ENCODE measurements at regions of chr5 and their contacts with region 1.

Region 1: GRCh38 chr5:100903039-100903887 is at the start of gene ST8SIA4:
- DNase-seq: peak; percentile 87 to 96 (median 88)
- H3K4me3 ChIP-seq: peak within 1 kb of the TSS; percentile 94
- H3K4me3 Mint-ChIP-seq: peak within 1 kb of the TSS; percentile 90 to 99 (median 96)
- H3K27ac ChIP-seq: peak within 1 kb of the TSS; percentile 86
- H3K27ac Mint-ChIP-seq: peak within 1 kb of the TSS; percentile 92 to 99 (median 97)
- H3K4me1 ChIP-seq: peaks cover 38% of the 10 kb centered on the region
- H3K4me1 Mint-ChIP-seq: peaks cover 48 to 58% (median 56%) of the 10 kb centered on the region in 3 donors
- H3K27me3 ChIP-seq: no peaks in the 10 kb centered on the region
- H3K27me3 Mint-ChIP-seq: no peaks in the 10 kb centered on the region
- total RNA-seq, gene ST8SIA4: 53.5 to 56.9 TPM

Region 2: GRCh38 chr5:100779669-100780375 is 123.4 kb before region 1 on chr5:
- CTCF ChIA-PET with region 1: interaction called, 13 read pairs
- POLR2A ChIA-PET with region 1: interaction called, 7 read pairs
- DNase-seq: no peak
- H3K4me3 ChIP-seq: peak overlapping the region; percentile 56
- H3K4me3 Mint-ChIP-seq: peak overlapping the region; percentile 67 to 82 (median 79)
- H3K27ac ChIP-seq: no peak overlapping the region
- H3K27ac Mint-ChIP-seq: peak overlapping the region; percentile 11 to 96 (median 88)
- H3K4me1 ChIP-seq: peaks cover 15% of the 10 kb centered on the region
- H3K4me1 Mint-ChIP-seq: peaks cover 25 to 33% (median 32%) of the 10 kb centered on the region in 3 donors
- H3K27me3 ChIP-seq: no peaks in the 10 kb centered on the region
- H3K27me3 Mint-ChIP-seq: peaks cover 0 to 1% of the 10 kb centered on the region in 2 donors

Region 3: DNA sequence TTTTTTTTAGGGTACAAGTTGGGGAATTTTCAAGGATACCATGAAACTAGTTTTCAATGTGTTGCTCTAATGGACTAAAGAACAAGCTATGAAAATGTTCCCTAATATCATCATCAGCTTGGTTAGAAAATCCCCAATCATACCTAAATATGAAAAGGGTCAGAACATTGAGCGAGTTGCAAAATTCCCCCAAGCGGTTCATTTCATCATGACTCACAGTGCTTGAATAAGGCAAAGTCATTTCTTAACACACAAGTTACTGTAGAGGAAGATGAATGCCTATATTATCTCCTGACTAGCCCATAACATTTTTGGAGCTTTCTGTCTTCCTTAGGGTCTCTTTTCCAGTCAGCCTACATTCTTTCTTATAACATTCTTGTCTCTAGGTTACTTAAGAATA is 62.9 kb before region 1 on chr5:
- CTCF ChIA-PET with region 1: interaction called, 19 read pairs
- POLR2A ChIA-PET with region 1: interaction called, 5 read pairs
- DNase-seq: peak in 1 of 5 donors; percentile 4
- H3K4me3 ChIP-seq: no peak overlapping the region
- H3K4me3 Mint-ChIP-seq: peak overlapping the region in 4 of 7 donors; percentile 76 to 81 (median 77)
- H3K27ac ChIP-seq: no peak overlapping the region
- H3K27ac Mint-ChIP-seq: peak overlapping the region in 6 of 8 donors; percentile 20 to 93 (median 60)
- H3K4me1 ChIP-seq: peaks cover 15% of the 10 kb centered on the region
- H3K4me1 Mint-ChIP-seq: peaks cover 61 to 85% (median 76%) of the 10 kb centered on the region in 3 donors
- H3K27me3 ChIP-seq: no peaks in the 10 kb centered on the region
- H3K27me3 Mint-ChIP-seq: no peaks in the 10 kb centered on the region

Region 4: DNA sequence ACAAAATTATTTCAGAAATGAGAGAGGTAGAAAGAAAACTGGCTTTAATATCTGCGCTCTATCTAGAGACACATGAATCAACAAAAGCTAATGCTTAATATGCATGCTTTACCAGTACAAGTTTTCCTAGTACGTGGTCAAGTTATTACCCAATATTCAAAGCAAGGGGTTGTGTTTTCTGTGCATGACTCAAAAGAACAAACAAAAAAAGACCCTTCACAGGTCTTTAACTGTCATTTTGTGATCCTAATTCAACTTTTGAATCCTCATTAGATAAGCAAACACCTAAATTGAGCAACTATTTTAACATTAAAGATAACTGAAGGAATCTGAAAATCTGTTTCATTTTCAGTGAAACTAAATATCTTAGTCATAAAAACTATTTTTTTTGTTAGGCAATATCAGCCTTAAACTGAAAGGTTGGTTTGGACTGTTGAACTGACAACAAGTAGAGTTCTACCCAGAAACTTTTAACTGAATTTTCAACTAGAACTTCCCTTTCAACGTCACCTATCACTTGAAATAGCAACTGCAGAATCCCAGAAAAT is 12.7 kb before region 1 on chr5:
- CTCF ChIA-PET with region 1: interaction called, 17 read pairs
- POLR2A ChIA-PET with region 1: interaction called, 39 read pairs
- DNase-seq: no peak
- H3K4me3 ChIP-seq: peak overlapping the region; percentile 21
- H3K4me3 Mint-ChIP-seq: peak overlapping the region; percentile 69 to 81 (median 76)
- H3K27ac ChIP-seq: peak overlapping the region; percentile 14
- H3K27ac Mint-ChIP-seq: peak overlapping the region; percentile 70 to 94 (median 88)
- H3K4me1 ChIP-seq: peaks cover 45% of the 10 kb centered on the region
- H3K4me1 Mint-ChIP-seq: peaks cover 65 to 92% (median 89%) of the 10 kb centered on the region in 3 donors
- H3K27me3 ChIP-seq: no peaks in the 10 kb centered on the region
- H3K27me3 Mint-ChIP-seq: no peaks in the 10 kb centered on the region

Region 5: GRCh38 chr5:101143526-101143925 is 240.3 kb after region 1 on chr5:
- CTCF ChIA-PET with region 1: no interaction called
- POLR2A ChIA-PET with region 1: no interaction called
- DNase-seq: no peak
- H3K4me3 ChIP-seq: no peak overlapping the region
- H3K4me3 Mint-ChIP-seq: no peak overlapping the region
- H3K27ac ChIP-seq: no peak overlapping the region
- H3K27ac Mint-ChIP-seq: no peak overlapping the region
- H3K4me1 ChIP-seq: no peaks in the 10 kb centered on the region
- H3K4me1 Mint-ChIP-seq: no peaks in the 10 kb centered on the region
- H3K27me3 ChIP-seq: no peaks in the 10 kb centered on the region
- H3K27me3 Mint-ChIP-seq: peaks cover 3 to 6% of the 10 kb centered on the region in 2 donors

Measured in CD8-positive, alpha-beta memory T cell (primary cell).